Naive thymus-derived CD4-positive, alpha-beta T cell (primary cell): ENCODE measurements at regions of chr9 and their contacts with region 1.

Region 1: GRCh38 chr9:20319641-20320337 is 302.5 kb downstream of the MLLT3 start:
- DNase-seq: peak in 1 of 9 donors; percentile 33
- ATAC-seq: no peak
- H3K4me3 ChIP-seq: no peak overlapping the region
- H3K4me3 Mint-ChIP-seq: peak overlapping the region in 9 of 10 donors; percentile 5 to 89 (median 33)
- H3K27ac ChIP-seq: no peak overlapping the region
- H3K27ac Mint-ChIP-seq: peak overlapping the region; percentile 62 to 99 (median 92)
- H3K4me1 ChIP-seq: peaks cover 44 to 95% of the 10 kb centered on the region in 2 donors
- H3K4me1 Mint-ChIP-seq: peaks cover 53 to 100% (median 96%) of the 10 kb centered on the region in 7 donors
- H3K27me3 ChIP-seq: no peaks in the 10 kb centered on the region
- H3K27me3 Mint-ChIP-seq: peaks cover 0 to 2% (median 0%) of the 10 kb centered on the region in 5 donors

Region 2: GRCh38 chr9:20043035-20043434 is 276.8 kb before region 1 on chr9:
- CTCF ChIA-PET with region 1: no interaction called
- POLR2A ChIA-PET with region 1: interaction called, 3 read pairs
- intact Hi-C with region 1: loop called in 1 of 2 experiments (anchors 2 kb)
- DNase-seq: peak in 6 of 9 donors; percentile 6 to 46 (median 34)
- ATAC-seq: peak; percentile 59
- H3K4me3 ChIP-seq: peak overlapping the region; percentile 28
- H3K4me3 Mint-ChIP-seq: peak overlapping the region; percentile 61 to 85 (median 80)
- H3K27ac ChIP-seq: peak overlapping the region; percentile 17
- H3K27ac Mint-ChIP-seq: peak overlapping the region; percentile 84 to 95 (median 91)
- H3K4me1 ChIP-seq: peaks cover 0 to 12% of the 10 kb centered on the region in 2 donors
- H3K4me1 Mint-ChIP-seq: peaks cover 9 to 43% (median 27%) of the 10 kb centered on the region in 7 donors
- H3K27me3 ChIP-seq: no peaks in the 10 kb centered on the region
- H3K27me3 Mint-ChIP-seq: no peaks in the 10 kb centered on the region

Region 3: DNA sequence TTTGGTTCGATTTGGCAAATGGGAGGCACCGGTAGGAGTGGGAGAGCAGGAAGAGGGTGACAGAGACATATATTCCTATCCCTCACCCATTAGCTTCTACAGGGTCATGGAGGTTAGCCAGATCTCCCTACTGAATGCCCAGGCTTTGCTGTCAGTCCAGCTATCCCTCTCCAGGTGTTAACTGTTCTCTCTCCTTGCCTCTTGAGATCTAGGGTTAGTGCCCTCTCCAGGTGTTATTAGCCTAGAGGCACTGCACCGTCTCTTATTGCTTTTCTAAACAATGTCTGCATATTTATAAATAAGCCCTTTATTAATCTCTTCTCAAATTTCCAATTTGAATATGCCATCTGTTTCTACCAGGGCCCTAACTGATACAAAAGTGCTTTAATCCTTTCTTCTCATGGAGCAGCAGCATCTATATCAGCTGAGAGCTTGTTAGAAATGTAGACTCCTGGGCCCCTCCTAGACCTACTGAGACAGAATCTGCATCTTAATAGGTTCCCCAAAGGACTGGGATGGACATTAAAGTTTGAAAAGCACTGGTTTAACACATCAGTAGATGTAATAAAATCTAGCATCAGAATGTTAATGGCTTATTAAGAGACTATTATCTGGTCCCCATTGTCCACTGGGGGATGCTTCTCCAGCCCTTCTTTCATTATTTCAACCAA is 208.5 kb before region 1 on chr9:
- CTCF ChIA-PET with region 1: no interaction called
- POLR2A ChIA-PET with region 1: no interaction called
- intact Hi-C with region 1: no loop called
- DNase-seq: no peak
- ATAC-seq: no peak
- H3K4me3 ChIP-seq: no peak overlapping the region
- H3K4me3 Mint-ChIP-seq: no peak overlapping the region
- H3K27ac ChIP-seq: no peak overlapping the region
- H3K27ac Mint-ChIP-seq: no peak overlapping the region
- H3K4me1 ChIP-seq: no peaks in the 10 kb centered on the region
- H3K4me1 Mint-ChIP-seq: no peaks in the 10 kb centered on the region
- H3K27me3 ChIP-seq: no peaks in the 10 kb centered on the region
- H3K27me3 Mint-ChIP-seq: peaks cover 0 to 3% (median 0%) of the 10 kb centered on the region in 5 donors

Region 4: DNA sequence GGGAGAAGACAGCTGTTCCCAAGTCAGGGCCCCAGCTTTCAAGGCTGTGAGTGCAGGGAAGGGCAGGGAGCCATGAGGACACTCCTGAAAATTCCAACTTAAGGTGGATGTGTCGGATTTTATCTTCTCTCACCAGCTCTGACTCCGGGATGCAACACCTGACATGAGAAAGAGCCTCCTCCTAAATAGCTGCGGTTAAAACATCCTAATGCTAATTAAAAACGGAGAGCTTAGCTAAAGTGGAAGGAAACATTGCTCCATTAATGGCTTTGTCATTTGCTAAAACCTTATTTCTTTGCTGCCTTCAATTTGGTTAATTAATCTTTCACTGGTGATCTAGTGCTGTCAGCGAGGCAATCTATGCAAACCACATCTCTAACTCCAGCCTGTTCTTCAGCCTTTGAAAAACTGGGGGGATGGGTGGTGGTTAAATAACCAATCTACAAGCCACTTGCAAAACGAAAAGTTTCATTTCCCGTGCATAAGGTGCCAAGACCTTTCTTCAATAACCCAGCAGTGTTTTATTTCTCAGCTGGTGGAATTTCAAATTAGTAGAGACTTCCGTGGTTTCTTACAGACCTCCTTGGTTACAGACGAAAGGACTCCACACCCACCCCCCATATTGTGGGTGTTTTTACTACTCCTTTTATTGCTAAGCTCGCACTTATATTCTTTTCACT is 77.1 kb before region 1 on chr9:
- CTCF ChIA-PET with region 1: interaction called, 5 read pairs
- POLR2A ChIA-PET with region 1: interaction called, 7 read pairs
- intact Hi-C with region 1: loop called (anchors 1 to 2 kb)
- DNase-seq: peak in 8 of 9 donors; percentile 33 to 82 (median 76)
- ATAC-seq: peak; percentile 86
- H3K4me3 ChIP-seq: peak overlapping the region; percentile 42
- H3K4me3 Mint-ChIP-seq: peak overlapping the region; percentile 51 to 89 (median 83)
- H3K27ac ChIP-seq: peak overlapping the region; percentile 1
- H3K27ac Mint-ChIP-seq: peak overlapping the region; percentile 39 to 90 (median 74)
- H3K4me1 ChIP-seq: peaks cover 18 to 32% of the 10 kb centered on the region in 2 donors
- H3K4me1 Mint-ChIP-seq: peaks cover 38 to 84% (median 72%) of the 10 kb centered on the region in 7 donors
- H3K27me3 ChIP-seq: no peaks in the 10 kb centered on the region
- H3K27me3 Mint-ChIP-seq: no peaks in the 10 kb centered on the region

Region 5: GRCh38 chr9:20289423-20290010 is 30.3 kb before region 1 on chr9:
- CTCF ChIA-PET with region 1: interaction called, 3 read pairs
- POLR2A ChIA-PET with region 1: interaction called, 4 read pairs
- intact Hi-C with region 1: loop called in 1 of 2 experiments (anchors 5 kb)
- DNase-seq: no peak
- ATAC-seq: no peak
- H3K4me3 ChIP-seq: no peak overlapping the region
- H3K4me3 Mint-ChIP-seq: no peak overlapping the region
- H3K27ac ChIP-seq: no peak overlapping the region
- H3K27ac Mint-ChIP-seq: no peak overlapping the region
- H3K4me1 ChIP-seq: peaks cover 0 to 25% of the 10 kb centered on the region in 2 donors
- H3K4me1 Mint-ChIP-seq: peaks cover 8 to 42% (median 34%) of the 10 kb centered on the region in 7 donors
- H3K27me3 ChIP-seq: no peaks in the 10 kb centered on the region
- H3K27me3 Mint-ChIP-seq: no peaks in the 10 kb centered on the region

Region 6: DNA sequence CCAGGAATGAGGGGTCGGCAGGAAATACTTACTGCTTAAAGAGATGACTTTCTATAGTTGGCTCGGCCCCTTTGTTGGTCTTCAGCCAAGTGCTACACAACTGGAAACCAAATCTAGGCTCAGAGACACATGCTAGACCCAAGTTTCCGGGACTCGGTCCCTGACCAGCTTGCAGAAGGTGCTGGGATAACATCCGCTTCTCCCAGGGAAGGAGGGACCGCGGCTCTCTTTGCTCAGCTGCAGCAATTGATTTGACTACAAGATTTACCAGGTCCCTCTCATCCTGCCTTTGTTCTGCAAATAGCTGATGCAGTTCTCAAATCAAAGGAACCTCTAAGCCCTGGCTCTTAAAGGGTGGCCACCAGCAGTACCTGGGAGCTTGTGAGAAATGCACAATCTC is 12.2 kb before region 1 on chr9:
- CTCF ChIA-PET with region 1: interaction called, 3 read pairs
- POLR2A ChIA-PET with region 1: interaction called, 36 read pairs
- intact Hi-C with region 1: loop called in 1 of 2 experiments (anchors 1 kb)
- DNase-seq: no peak
- ATAC-seq: no peak
- H3K4me3 ChIP-seq: no peak overlapping the region
- H3K4me3 Mint-ChIP-seq: no peak overlapping the region
- H3K27ac ChIP-seq: no peak overlapping the region
- H3K27ac Mint-ChIP-seq: peak overlapping the region in 1 of 9 donors; percentile 62
- H3K4me1 ChIP-seq: no peaks in the 10 kb centered on the region
- H3K4me1 Mint-ChIP-seq: peaks cover 4 to 37% (median 19%) of the 10 kb centered on the region in 7 donors
- H3K27me3 ChIP-seq: no peaks in the 10 kb centered on the region
- H3K27me3 Mint-ChIP-seq: peaks cover 0 to 7% (median 0%) of the 10 kb centered on the region in 5 donors

Region 7: GRCh38 chr9:20361656-20362570 is 42.1 kb after region 1 on chr9:
- CTCF ChIA-PET with region 1: interaction called, 4 read pairs
- POLR2A ChIA-PET with region 1: no interaction called
- intact Hi-C with region 1: loop called in 1 of 2 experiments (anchors 2 kb)
- DNase-seq: peak in 2 of 9 donors; percentile 18 to 23
- ATAC-seq: peak; percentile 58
- H3K4me3 ChIP-seq: no peak overlapping the region
- H3K4me3 Mint-ChIP-seq: peak overlapping the region; percentile 11 to 76 (median 67)
- H3K27ac ChIP-seq: peak overlapping the region; percentile 45
- H3K27ac Mint-ChIP-seq: peak overlapping the region; percentile 65 to 94 (median 86)
- H3K4me1 ChIP-seq: peaks cover 0 to 31% of the 10 kb centered on the region in 2 donors
- H3K4me1 Mint-ChIP-seq: peaks cover 28 to 91% (median 65%) of the 10 kb centered on the region in 7 donors
- H3K27me3 ChIP-seq: no peaks in the 10 kb centered on the region
- H3K27me3 Mint-ChIP-seq: no peaks in the 10 kb centered on the region

Region 8: DNA sequence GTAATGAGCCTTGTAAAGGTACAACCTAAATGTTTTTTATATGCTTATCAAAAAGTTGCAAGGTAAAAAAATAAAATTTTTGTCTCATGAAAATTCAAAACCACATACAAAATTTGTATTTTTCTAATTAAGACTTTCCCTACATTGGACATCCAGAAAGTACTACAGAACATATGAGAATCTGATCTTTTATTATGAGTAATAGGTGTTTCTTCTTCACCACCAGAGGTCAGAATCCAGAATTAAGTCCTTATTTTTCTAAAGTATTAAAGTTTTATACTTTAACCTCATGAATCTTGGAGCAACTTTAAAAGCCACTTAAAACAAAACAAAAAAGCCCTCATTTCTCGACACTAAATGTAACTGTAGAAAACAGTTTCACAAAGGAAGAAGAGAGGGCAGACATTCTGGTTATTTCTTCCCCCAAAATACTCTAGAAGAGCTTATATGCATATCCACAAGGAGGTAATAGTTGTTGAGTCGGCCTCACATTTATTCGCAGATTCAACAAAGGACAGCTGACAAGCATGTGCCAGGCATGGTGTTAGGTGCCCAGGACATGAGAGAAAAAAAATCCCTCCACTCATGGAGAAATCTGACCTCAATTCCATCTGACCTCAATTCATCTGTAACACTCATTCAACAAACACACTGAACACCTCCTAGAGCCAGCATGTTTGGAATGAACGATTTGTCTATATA is 233.2 kb after region 1 on chr9:
- CTCF ChIA-PET with region 1: no interaction called
- POLR2A ChIA-PET with region 1: no interaction called
- intact Hi-C with region 1: no loop called
- DNase-seq: peak in 1 of 9 donors; percentile 28
- ATAC-seq: no peak
- H3K4me3 ChIP-seq: no peak overlapping the region
- H3K4me3 Mint-ChIP-seq: peak overlapping the region; percentile 27 to 84 (median 46)
- H3K27ac ChIP-seq: no peak overlapping the region
- H3K27ac Mint-ChIP-seq: peak overlapping the region; percentile 2 to 79 (median 54)
- H3K4me1 ChIP-seq: peaks cover 23 to 33% of the 10 kb centered on the region in 2 donors
- H3K4me1 Mint-ChIP-seq: peaks cover 58 to 86% (median 79%) of the 10 kb centered on the region in 7 donors
- H3K27me3 ChIP-seq: no peaks in the 10 kb centered on the region
- H3K27me3 Mint-ChIP-seq: no peaks in the 10 kb centered on the region

Region 9: DNA sequence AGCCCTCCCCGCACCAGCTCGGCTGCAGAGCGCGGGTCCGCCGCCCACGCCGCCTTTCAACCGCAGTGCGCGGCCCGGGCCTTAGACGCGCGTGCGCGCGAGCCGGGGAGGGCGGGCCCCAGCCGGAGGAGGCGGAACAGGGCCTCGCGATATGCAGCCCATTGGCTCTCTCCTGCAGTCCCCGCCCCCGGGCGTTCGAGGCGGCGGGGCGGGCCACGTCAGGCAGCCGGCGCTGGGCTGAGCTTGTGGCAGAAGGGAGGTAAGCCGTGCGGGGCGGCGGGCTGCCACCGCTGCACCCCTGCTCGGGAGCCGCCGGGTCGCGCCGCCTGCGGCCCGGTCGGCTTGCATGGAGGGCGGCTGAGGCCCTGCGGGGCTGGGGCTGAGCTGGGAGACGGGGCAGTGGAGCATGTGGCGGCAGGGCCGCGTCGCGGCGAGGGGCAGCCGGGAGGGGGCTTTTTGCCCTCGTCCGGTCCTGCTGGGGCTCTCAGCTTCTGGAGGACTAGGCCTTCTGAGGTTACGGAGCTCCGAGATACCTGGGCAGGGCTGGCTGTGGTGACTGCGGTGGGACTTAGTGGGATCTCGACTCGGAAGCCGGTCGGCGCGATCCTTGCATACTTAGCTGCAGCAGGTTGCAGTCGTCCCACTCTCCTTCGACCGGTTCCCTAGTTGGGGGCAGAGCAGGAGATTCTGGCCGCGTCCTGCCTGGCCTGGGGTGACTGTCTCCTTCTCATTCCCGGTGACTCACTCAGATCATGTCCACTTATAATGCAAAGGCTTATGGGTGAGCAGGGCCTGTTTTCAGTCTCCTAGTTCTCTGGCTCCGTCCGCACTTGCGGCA is 364.5 kb after region 1 on chr9 and contains the start of gene FOCAD:
- CTCF ChIA-PET with region 1: no interaction called
- POLR2A ChIA-PET with region 1: no interaction called
- intact Hi-C with region 1: loop called (anchors 2 to 5 kb)
- DNase-seq: peak; percentile 94 to 99 (median 96)
- ATAC-seq: peak; percentile 99
- H3K4me3 ChIP-seq: peak within 1 kb of the TSS; percentile 95
- H3K4me3 Mint-ChIP-seq: peak within 1 kb of the TSS; percentile 89 to 98 (median 96)
- H3K27ac ChIP-seq: peak within 1 kb of the TSS; percentile 81
- H3K27ac Mint-ChIP-seq: peak within 1 kb of the TSS; percentile 78 to 96 (median 92)
- H3K4me1 ChIP-seq: peaks cover 0 to 6% of the 10 kb centered on the region in 2 donors
- H3K4me1 Mint-ChIP-seq: peaks cover 11 to 29% (median 24%) of the 10 kb centered on the region in 7 donors
- H3K27me3 ChIP-seq: no peaks in the 10 kb centered on the region
- H3K27me3 Mint-ChIP-seq: no peaks in the 10 kb centered on the region
- total RNA-seq, gene FOCAD: 12.8 to 33.7 (median 22.3) TPM

Region 10: GRCh38 chr9:21326526-21327139 is 1006.8 kb after region 1 on chr9:
- CTCF ChIA-PET with region 1: no interaction called
- POLR2A ChIA-PET with region 1: no interaction called
- intact Hi-C with region 1: no loop called
- DNase-seq: peak in 7 of 9 donors; percentile 31 to 67 (median 56)
- ATAC-seq: peak; percentile 95
- H3K4me3 ChIP-seq: no peak overlapping the region
- H3K4me3 Mint-ChIP-seq: peak overlapping the region in 4 of 10 donors; percentile 17 to 62 (median 40)
- H3K27ac ChIP-seq: no peak overlapping the region
- H3K27ac Mint-ChIP-seq: peak overlapping the region in 3 of 9 donors; percentile 17 to 73 (median 35)
- H3K4me1 ChIP-seq: peaks cover 10 to 23% of the 10 kb centered on the region in 2 donors
- H3K4me1 Mint-ChIP-seq: peaks cover 32 to 67% (median 55%) of the 10 kb centered on the region in 7 donors
- H3K27me3 ChIP-seq: no peaks in the 10 kb centered on the region
- H3K27me3 Mint-ChIP-seq: no peaks in the 10 kb centered on the region